Upper lobe of right lung (tissue), 1 donor: ENCODE measurements at regions of chr6 and their contacts with region 1.

Region 1: GRCh38 chr6:35583893-35584688 is 71.4 kb upstream of the TULP1 start:
- DNase-seq: no peak
- ATAC-seq: peak; percentile 87
- H3K4me3 ChIP-seq: no peak overlapping the region
- H3K27ac ChIP-seq: no peak overlapping the region
- H3K4me1 ChIP-seq: peaks cover 31% of the 10 kb centered on the region
- H3K27me3 ChIP-seq: no peaks in the 10 kb centered on the region
- CTCF ChIP-seq: peak; percentile 75

Region 2: GRCh38 chr6:35435074-35435837 is 148.8 kb before region 1 on chr6:
- intact Hi-C with region 1: no loop called
- DNase-seq: no peak
- ATAC-seq: peak; percentile 15
- H3K4me3 ChIP-seq: no peak overlapping the region
- H3K27ac ChIP-seq: no peak overlapping the region
- H3K4me1 ChIP-seq: no peaks in the 10 kb centered on the region
- H3K27me3 ChIP-seq: no peaks in the 10 kb centered on the region
- CTCF ChIP-seq: no peak

Region 3: DNA sequence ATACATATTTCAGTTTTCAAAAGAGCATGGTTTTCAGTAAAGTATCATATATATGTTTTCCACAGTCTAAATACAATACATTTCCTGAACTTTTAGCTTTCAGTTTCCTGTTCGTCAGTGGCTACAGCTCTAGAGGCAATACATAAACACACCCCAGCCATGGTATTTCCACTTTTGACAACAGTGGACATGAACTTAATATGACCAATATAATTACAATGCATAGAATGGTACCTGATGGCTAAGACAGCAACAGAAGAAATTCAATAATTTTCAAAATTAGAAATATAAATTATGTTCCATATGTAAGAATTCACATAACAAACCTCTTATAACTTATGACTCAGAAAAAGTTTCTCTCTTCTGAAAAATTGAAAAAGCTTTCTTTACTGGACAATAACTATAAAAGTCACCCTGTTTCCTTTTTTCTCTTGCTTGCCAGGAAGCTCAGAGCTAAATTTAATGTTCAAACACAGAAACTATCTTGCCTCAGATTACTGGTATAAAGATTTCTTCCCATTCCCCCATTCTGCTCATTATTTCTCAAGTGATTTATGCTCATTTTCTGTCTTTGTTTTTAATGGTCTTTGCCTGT is 85.5 kb after region 1 on chr6:
- intact Hi-C with region 1: loop called (anchors 10 kb)
- DNase-seq: no peak
- ATAC-seq: no peak
- H3K4me3 ChIP-seq: no peak overlapping the region
- H3K27ac ChIP-seq: no peak overlapping the region
- H3K4me1 ChIP-seq: peaks cover 47% of the 10 kb centered on the region
- H3K27me3 ChIP-seq: no peaks in the 10 kb centered on the region
- CTCF ChIP-seq: no peak

Region 4: DNA sequence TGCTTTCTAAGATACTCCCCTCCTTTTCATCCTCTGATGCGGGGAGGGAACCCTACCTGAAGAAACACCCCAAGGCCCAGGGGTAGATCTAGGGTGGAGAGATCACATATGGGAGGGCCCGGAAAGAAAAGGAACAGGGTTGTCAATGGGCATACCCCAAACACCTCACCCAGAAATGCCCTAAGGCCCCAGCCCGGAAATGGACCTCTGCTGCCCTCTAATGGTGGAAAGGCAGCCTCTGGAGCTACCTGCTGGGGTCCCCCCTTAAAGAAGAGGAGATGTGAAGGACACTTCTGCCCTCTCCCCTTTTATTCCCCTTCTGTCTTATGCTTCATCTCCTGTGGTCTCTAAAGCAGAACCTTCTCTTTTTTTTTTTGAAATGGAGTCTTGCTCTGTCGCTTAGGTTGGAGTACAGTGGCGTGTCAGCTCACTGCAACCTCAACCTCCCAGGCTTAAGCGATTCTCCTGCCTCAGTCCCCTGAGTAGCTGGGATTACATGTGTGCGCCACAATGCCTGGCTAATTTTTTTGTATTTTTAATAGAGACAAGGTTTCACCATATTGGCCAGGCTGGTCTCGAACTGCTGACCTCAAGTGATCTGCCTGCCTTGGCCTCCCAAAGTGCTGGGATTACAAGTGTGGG is 152.3 kb after region 1 on chr6:
- intact Hi-C with region 1: loop called (anchors 5 kb)
- DNase-seq: peak; percentile 84
- ATAC-seq: peak; percentile 55
- H3K4me3 ChIP-seq: no peak overlapping the region
- H3K27ac ChIP-seq: no peak overlapping the region
- H3K4me1 ChIP-seq: peaks cover 23% of the 10 kb centered on the region
- H3K27me3 ChIP-seq: no peaks in the 10 kb centered on the region
- CTCF ChIP-seq: peak; percentile 95

Region 5: GRCh38 chr6:35844290-35844689 is 260.2 kb after region 1 on chr6:
- intact Hi-C with region 1: no loop called
- DNase-seq: no peak
- ATAC-seq: no peak
- H3K4me3 ChIP-seq: no peak overlapping the region
- H3K27ac ChIP-seq: no peak overlapping the region
- H3K4me1 ChIP-seq: no peaks in the 10 kb centered on the region
- H3K27me3 ChIP-seq: no peaks in the 10 kb centered on the region
- CTCF ChIP-seq: no peak